Panc1 (cell line): ENCODE measurements at regions of chr7 and their contacts with region 1.

Region 1: GRCh38 chr7:132318352-132319318 is 257.6 kb downstream of the PLXNA4 start:
- DNase-seq: peak; percentile 66
- ATAC-seq: peak; percentile 97
- H3K4me3 ChIP-seq: no peak overlapping the region
- H3K27ac ChIP-seq: no peak overlapping the region
- H3K4me1 ChIP-seq: no peaks in the 10 kb centered on the region
- H3K27me3 ChIP-seq: peaks cover 14% of the 10 kb centered on the region
- CTCF ChIP-seq: peak; percentile 92

Region 2: DNA sequence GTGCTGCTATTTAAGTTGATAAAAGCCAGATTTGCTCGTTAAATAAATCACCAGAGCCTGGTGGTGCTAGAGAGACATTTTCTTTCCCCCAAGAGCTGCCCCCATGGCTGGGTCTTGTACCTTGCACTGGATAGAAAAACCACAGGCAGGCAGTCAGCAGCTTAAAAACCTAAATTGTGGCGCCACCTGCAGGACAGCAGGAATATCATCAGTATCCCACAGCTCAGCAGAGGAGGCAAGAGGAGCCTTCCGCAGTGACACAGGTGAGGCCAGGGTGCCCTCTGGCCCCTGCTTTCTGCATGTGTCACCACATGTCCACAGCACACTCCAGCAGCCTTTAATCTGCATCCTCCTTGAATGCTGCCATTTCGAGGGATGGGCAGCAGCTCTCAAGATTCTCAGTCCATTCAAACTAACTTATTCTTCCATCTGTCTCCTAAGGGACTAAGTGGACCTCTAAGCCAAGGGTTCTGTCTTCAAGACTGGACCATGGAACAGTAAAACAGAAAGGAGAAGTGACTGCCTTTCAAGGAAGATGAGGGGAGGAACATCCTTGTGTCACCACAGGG is 262.2 kb after region 1 on chr7:
- CTCF ChIA-PET with region 1: interaction called, 3 read pairs
- POLR2A ChIA-PET with region 1: no interaction called
- in situ Hi-C with region 1: no loop called
- intact Hi-C with region 1: loop called (anchors 2 kb)
- DNase-seq: peak; percentile 60
- ATAC-seq: peak; percentile 90
- H3K4me3 ChIP-seq: no peak overlapping the region
- H3K27ac ChIP-seq: no peak overlapping the region
- H3K4me1 ChIP-seq: no peaks in the 10 kb centered on the region
- H3K27me3 ChIP-seq: peaks cover 31% of the 10 kb centered on the region
- CTCF ChIP-seq: peak; percentile 85